Right ventricle myocardium inferior (tissue), 1 donor: ENCODE measurements at regions of chr1 and their contacts with region 1.

Region 1: GRCh38 chr1:51729824-51730301 is 113.0 kb downstream of the OSBPL9 start:
- DNase-seq: peak; percentile 81
- ATAC-seq: no peak

Region 2: DNA sequence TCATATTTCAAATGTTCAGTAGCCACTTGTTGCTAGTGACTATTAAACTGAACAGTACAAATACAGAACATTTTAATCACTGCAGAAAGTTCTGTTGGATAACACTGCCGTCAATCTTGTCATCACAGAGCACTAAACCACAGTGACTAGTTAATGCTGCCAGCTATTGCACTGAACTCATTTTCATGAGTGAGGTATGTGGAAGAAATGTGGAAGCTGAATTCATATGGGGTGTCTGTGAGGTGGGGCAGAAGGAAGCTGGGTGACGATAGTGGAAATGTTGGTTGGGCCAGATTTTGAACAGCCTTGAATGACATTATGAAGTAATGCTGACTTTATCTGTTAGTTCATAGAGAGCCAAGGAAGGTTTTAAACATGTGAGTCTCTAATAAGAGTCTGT is 63.4 kb before region 1 on chr1:
- intact Hi-C with region 1: loop called (anchors 5 kb)
- DNase-seq: no peak
- ATAC-seq: peak; percentile 83

Region 3: DNA sequence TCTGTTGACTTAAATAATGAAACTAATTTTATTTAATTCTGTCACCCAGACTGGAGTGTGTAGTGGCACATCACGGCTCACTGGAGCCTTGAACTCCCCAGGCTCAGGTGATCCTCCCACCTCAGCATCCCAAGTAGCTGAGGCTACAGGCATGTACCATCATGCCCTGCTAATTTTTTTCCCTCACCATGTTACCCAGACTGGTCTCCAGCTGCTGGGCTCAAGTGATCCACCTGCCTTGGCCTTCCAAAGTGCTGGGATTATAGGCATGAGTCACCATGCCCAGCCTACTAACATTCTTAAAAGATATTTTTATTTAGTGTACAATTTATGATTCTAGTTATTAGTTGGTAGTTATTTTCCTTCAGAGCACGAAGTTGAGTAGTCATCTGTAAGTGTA is 99.2 kb after region 1 on chr1:
- intact Hi-C with region 1: no loop called
- DNase-seq: no peak
- ATAC-seq: no peak